Heart right ventricle (tissue), 16 donors: ENCODE measurements at regions of chr9 and their contacts with region 1.

Region 1: DNA sequence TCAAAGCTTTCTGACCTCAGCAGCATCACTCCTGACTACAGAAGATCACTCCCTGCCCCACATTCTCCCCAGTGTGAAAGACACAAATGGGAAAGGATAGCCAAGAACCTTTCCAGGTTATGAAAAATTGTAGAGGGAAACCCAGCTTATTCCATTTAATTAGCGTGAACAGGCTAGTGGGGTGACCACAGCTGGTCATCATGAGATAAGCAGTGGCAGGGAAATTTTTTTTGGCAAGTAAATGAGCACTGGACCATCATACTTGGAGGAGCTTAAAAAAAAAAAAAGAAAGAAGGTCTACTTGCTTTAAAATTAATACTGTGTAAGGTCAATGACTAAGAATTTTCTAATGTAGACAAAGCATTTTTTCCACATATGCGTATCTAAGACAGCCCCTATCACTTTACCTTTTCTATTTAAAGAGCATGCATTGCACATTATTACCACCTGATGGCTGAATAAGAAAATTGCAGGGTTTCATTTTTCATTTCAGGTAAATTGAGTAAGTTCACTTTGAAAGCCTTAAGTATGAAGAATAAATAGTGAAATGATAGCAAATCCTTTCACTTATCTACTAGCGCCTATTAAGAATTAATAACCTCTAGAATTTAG is 123.6 kb downstream of the ELAVL2 start:
- DNase-seq: no peak
- ATAC-seq: no peak
- H3K4me3 ChIP-seq: no peak overlapping the region
- H3K27ac ChIP-seq: no peak overlapping the region
- H3K4me1 ChIP-seq: no peaks in the 10 kb centered on the region
- H3K27me3 ChIP-seq: no peaks in the 10 kb centered on the region
- CTCF ChIP-seq: no peak

Region 2: GRCh38 chr9:23769307-23769935 is 67.0 kb after region 1 on chr9:
- intact Hi-C with region 1: loop called in 2 of 10 experiments (anchors 10 kb)
- DNase-seq: no peak
- ATAC-seq: no peak
- H3K4me3 ChIP-seq: no peak overlapping the region
- H3K27ac ChIP-seq: no peak overlapping the region
- H3K4me1 ChIP-seq: peaks cover 0 to 8% (median 0%) of the 10 kb centered on the region in 9 donors
- H3K27me3 ChIP-seq: no peaks in the 10 kb centered on the region
- CTCF ChIP-seq: no peak

Region 3: DNA sequence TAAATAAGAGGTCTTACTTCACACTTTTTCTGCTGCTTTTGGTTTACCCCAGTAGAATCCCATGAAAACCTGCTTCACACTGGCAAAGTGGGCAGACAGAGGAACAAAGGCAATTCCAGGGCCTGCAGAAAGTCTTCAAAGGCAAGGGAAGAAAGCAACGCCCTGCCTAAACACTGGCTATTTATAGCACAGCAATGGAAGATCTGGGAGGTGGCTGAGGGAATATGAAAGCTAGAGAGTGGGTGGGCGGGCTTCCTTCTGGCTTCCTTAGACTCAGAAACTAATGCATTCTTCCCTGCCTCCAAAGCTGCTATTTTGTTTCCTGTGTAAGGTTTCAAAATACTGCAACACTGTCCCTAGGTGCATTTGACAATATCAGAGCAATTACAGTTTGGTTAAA is 76.8 kb after region 1 on chr9:
- intact Hi-C with region 1: loop called in 1 of 10 experiments (anchors 10 kb)
- DNase-seq: no peak
- ATAC-seq: no peak
- H3K4me3 ChIP-seq: no peak overlapping the region
- H3K27ac ChIP-seq: no peak overlapping the region
- H3K4me1 ChIP-seq: peaks cover 0 to 12% (median 5%) of the 10 kb centered on the region in 9 donors
- H3K27me3 ChIP-seq: no peaks in the 10 kb centered on the region
- CTCF ChIP-seq: no peak

Region 4: DNA sequence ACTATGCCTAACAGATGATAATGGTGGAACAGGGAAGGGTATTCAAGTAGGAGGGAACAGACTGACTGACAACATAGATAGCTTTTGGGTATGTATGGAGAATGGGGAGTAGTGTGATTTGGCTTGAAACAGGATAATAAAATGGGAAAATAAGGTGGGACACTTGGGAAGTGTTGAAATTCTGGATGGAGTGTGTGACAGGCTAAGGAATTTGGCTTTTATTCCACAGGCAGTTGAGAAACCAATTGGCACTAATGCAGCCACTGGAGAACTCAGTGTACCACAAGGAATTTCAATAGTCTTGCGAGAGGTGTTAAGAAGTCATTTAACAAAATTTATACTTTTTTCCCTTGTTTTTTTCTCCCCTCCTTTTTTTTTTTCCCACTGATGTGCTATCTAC is 277.1 kb after region 1 on chr9:
- intact Hi-C with region 1: no loop called
- DNase-seq: no peak
- ATAC-seq: no peak
- H3K4me3 ChIP-seq: no peak overlapping the region
- H3K27ac ChIP-seq: no peak overlapping the region
- H3K4me1 ChIP-seq: no peaks in the 10 kb centered on the region
- H3K27me3 ChIP-seq: no peaks in the 10 kb centered on the region
- CTCF ChIP-seq: no peak